ENCODE measurements at regions of chr5 and their contacts with region 1.

Region 1: GRCh38 chr5:90409318-90410177 is at the start of gene CETN3:
- DNase-seq: peak; percentile 96
- H3K4me3 ChIP-seq: peak within 1 kb of the TSS; percentile 91
- H3K27ac ChIP-seq: peak within 1 kb of the TSS; percentile 90
- H3K4me1 ChIP-seq: peaks cover 29% of the 10 kb centered on the region
- CTCF ChIP-seq: no peak
- total RNA-seq, gene CETN3: 34.6 and 43.2 TPM in 2 replicates

Region 2: GRCh38 chr5:88883059-88883835 is 1526.3 kb before region 1 on chr5 and contains the start of gene MEF2C:
- CTCF ChIA-PET with region 1: no interaction called
- POLR2A ChIA-PET with region 1: no interaction called
- intact Hi-C with region 1: loop called (anchors 5 kb)
- DNase-seq: peak; percentile 78
- H3K4me3 ChIP-seq: peak within 1 kb of the TSS; percentile 73
- H3K27ac ChIP-seq: peak within 1 kb of the TSS; percentile 2
- H3K4me1 ChIP-seq: peaks cover 39% of the 10 kb centered on the region
- CTCF ChIP-seq: no peak
- total RNA-seq, gene MEF2C: 5.5 and 9.5 TPM in 2 replicates

Region 3: GRCh38 chr5:90399251-90399650 is 10.3 kb before region 1 on chr5:
- CTCF ChIA-PET with region 1: no interaction called
- POLR2A ChIA-PET with region 1: interaction called, 24 read pairs
- intact Hi-C with region 1: no loop called
- DNase-seq: no peak
- H3K4me3 ChIP-seq: no peak overlapping the region
- H3K27ac ChIP-seq: no peak overlapping the region
- H3K4me1 ChIP-seq: no peaks in the 10 kb centered on the region
- CTCF ChIP-seq: no peak

Region 4: DNA sequence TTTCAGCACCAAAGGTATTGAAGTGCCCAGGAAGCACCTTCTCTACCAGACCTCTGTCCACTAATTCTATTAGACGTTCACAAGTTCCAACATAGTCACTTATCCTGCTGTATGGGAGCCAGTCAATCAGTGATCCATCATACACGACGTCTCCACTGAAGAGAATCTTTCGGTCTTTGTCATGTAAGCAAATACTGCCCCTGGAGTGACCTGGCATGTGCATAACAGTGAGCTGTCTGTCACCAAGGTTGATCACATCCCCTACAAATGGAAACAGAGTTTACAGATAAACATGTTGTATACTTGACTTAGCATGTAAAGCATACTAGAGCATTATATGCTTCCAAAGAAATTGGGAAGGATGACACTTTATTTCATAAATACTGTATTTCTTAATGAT is 51.7 kb after region 1 on chr5:
- CTCF ChIA-PET with region 1: no interaction called
- POLR2A ChIA-PET with region 1: interaction called, 11 read pairs
- intact Hi-C with region 1: no loop called
- DNase-seq: no peak
- H3K4me3 ChIP-seq: no peak overlapping the region
- H3K27ac ChIP-seq: no peak overlapping the region
- H3K4me1 ChIP-seq: no peaks in the 10 kb centered on the region
- CTCF ChIP-seq: no peak

Region 5: DNA sequence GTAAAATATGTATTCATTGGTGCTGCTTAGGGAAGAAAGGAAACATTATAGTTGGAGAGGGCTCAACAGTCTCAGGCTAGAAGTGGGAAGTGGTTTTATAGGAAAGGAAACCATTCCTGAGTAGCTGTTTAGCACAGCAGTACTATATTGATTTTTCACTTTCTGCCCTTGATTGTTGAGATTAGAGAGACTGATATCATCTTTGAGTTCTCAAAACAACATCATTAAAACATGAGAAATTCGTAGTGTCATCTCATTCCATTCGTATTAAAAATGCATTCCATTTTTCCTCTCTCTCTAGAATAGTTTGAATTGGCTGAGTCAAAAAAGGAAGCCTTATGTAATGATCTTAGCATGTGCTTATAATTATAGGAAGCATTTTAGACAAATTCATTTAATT is 79.2 kb after region 1 on chr5:
- CTCF ChIA-PET with region 1: no interaction called
- POLR2A ChIA-PET with region 1: no interaction called
- intact Hi-C with region 1: no loop called
- DNase-seq: no peak
- H3K4me3 ChIP-seq: no peak overlapping the region
- H3K27ac ChIP-seq: no peak overlapping the region
- H3K4me1 ChIP-seq: no peaks in the 10 kb centered on the region
- CTCF ChIP-seq: no peak

Region 6: GRCh38 chr5:90503596-90503995 is 94.0 kb after region 1 on chr5:
- CTCF ChIA-PET with region 1: no interaction called
- POLR2A ChIA-PET with region 1: interaction called, 12 read pairs
- intact Hi-C with region 1: no loop called
- DNase-seq: no peak
- H3K4me3 ChIP-seq: no peak overlapping the region
- H3K27ac ChIP-seq: no peak overlapping the region
- H3K4me1 ChIP-seq: peaks cover 3% of the 10 kb centered on the region
- CTCF ChIP-seq: no peak

Region 7: GRCh38 chr5:90696153-90696552 is 286.6 kb after region 1 on chr5:
- CTCF ChIA-PET with region 1: no interaction called
- POLR2A ChIA-PET with region 1: no interaction called
- intact Hi-C with region 1: no loop called
- DNase-seq: no peak
- H3K4me3 ChIP-seq: no peak overlapping the region
- H3K27ac ChIP-seq: no peak overlapping the region
- H3K4me1 ChIP-seq: no peaks in the 10 kb centered on the region
- CTCF ChIP-seq: no peak

Region 8: GRCh38 chr5:91311697-91312501 is 902.4 kb after region 1 on chr5:
- CTCF ChIA-PET with region 1: no interaction called
- POLR2A ChIA-PET with region 1: no interaction called
- intact Hi-C with region 1: loop called (anchors 1 kb)
- DNase-seq: peak; percentile 82
- H3K4me3 ChIP-seq: peak overlapping the region; percentile 33
- H3K27ac ChIP-seq: peak overlapping the region; percentile 52
- H3K4me1 ChIP-seq: peaks cover 59% of the 10 kb centered on the region
- CTCF ChIP-seq: peak; percentile 59

Measured in OCI-LY7 (cell line).